Activated CD8-positive, alpha-beta T cell treated with anti-CD3 and anti-CD28 coated beads for 36 hours (primary cell): ENCODE measurements at regions of chr3 and their contacts with region 1.

Region 1: DNA sequence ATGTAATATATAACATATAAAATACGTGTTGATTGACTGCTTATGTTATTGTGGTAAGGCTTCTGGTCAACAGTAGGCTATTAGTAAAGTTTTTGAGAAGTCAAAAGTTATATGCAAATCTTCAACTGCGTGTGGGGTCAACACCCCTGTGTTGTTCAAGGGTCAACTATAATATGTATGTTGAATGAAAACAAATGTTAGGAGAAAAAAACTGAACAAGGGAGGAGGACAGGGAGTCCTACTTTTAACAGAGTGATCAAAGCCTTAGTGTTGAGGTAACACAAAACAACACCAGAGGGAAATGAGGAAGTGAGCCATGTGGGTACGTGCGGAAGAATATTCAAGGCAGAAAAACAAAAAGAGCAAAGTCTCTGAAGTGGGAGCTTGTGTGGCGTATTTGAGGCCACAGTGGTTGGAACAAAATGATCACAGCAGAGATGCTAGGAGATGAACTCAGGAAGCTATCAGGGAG is 62.5 kb downstream of the SFMBT1 start:
- DNase-seq: peak; percentile 91
- ATAC-seq: peak; percentile 83
- H3K4me3 Mint-ChIP-seq: peak overlapping the region; percentile 53
- H3K27ac Mint-ChIP-seq: peak overlapping the region; percentile 90
- H3K4me1 Mint-ChIP-seq: peaks cover 40% of the 10 kb centered on the region
- H3K27me3 Mint-ChIP-seq: no peaks in the 10 kb centered on the region
- CTCF ChIP-seq: no peak

Region 2: GRCh38 chr3:53044711-53045517 is 61.5 kb after region 1 on chr3:
- CTCF ChIA-PET with region 1: interaction called, 3 read pairs
- POLR2A ChIA-PET with region 1: interaction called, 3 read pairs
- intact Hi-C with region 1: loop called (anchors 5 kb)
- DNase-seq: peak; percentile 42
- ATAC-seq: peak; percentile 44
- H3K4me3 Mint-ChIP-seq: peak overlapping the region; percentile 94
- H3K27ac Mint-ChIP-seq: peak overlapping the region; percentile 95
- H3K4me1 Mint-ChIP-seq: peaks cover 46% of the 10 kb centered on the region
- H3K27me3 Mint-ChIP-seq: peaks cover 3% of the 10 kb centered on the region
- CTCF ChIP-seq: no peak